CD14-positive monocyte (primary cell): ENCODE measurements at regions of chr2 and their contacts with region 1.

Region 1: GRCh38 chr2:190959911-190960788 is 53.8 kb downstream of the STAT1 start:
- DNase-seq: no peak
- H3K4me3 ChIP-seq: no peak overlapping the region
- H3K4me3 Mint-ChIP-seq: no peak overlapping the region
- H3K27ac ChIP-seq: no peak overlapping the region
- H3K27ac Mint-ChIP-seq: peak overlapping the region in 1 of 7 donors; percentile 70
- H3K4me1 ChIP-seq: no peaks in the 10 kb centered on the region
- H3K4me1 Mint-ChIP-seq: peaks cover 1% of the 10 kb centered on the region
- H3K27me3 ChIP-seq: no peaks in the 10 kb centered on the region
- H3K27me3 Mint-ChIP-seq: peaks cover 0 to 2% (median 0%) of the 10 kb centered on the region in 3 donors
- CTCF ChIP-seq: no peak

Region 2: GRCh38 chr2:190781604-190782198 is 178.4 kb before region 1 on chr2:
- intact Hi-C with region 1: no loop called
- DNase-seq: peak; percentile 14 to 38 (median 15)
- H3K4me3 ChIP-seq: no peak overlapping the region
- H3K4me3 Mint-ChIP-seq: no peak overlapping the region
- H3K27ac ChIP-seq: no peak overlapping the region
- H3K27ac Mint-ChIP-seq: no peak overlapping the region
- H3K4me1 ChIP-seq: no peaks in the 10 kb centered on the region
- H3K4me1 Mint-ChIP-seq: peaks cover 3% of the 10 kb centered on the region
- H3K27me3 ChIP-seq: no peaks in the 10 kb centered on the region
- H3K27me3 Mint-ChIP-seq: no peaks in the 10 kb centered on the region
- CTCF ChIP-seq: peak; percentile 80

Region 3: DNA sequence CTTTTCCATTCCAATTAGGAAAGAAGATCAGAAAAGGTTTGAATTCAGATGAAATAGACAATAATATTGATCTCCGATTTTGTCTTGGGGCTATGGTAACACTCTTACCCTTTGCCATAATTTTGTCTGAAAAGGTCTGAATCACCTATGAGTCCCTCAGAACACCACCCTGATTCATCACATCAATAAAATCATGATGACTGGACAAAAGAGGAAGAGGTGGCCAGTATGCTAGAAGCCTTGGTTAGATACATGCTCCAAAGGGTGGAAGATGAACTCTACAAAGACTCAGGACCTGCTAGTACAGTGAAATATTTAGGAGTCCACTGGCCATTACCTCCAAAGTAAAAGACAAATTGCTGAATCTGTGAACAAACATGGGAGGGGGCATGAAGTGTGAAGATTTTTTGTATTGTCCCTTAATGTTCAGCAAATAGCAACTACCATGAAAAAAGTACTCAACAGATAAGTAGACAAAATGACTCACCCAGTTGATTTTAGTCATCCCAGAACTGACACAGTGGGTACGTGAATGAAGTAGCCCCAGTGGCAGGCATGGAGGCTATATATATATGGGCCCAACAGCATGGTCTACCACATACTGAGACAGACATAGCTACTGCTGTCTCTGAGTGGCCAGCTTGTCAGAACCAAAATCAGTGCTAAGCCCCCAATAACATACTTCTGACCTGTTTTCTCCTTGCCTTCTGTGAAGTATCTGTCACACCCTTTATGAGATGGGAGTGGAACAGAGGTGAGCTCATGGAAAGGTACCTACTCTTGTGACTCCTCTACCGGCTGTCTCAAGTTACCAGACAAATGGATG is 116.1 kb before region 1 on chr2:
- intact Hi-C with region 1: loop called in 1 of 2 experiments (anchors 10 kb)
- DNase-seq: peak in 1 of 3 donors; percentile 42
- H3K4me3 ChIP-seq: no peak overlapping the region
- H3K4me3 Mint-ChIP-seq: no peak overlapping the region
- H3K27ac ChIP-seq: no peak overlapping the region
- H3K27ac Mint-ChIP-seq: no peak overlapping the region
- H3K4me1 ChIP-seq: no peaks in the 10 kb centered on the region
- H3K4me1 Mint-ChIP-seq: peaks cover 5% of the 10 kb centered on the region
- H3K27me3 ChIP-seq: no peaks in the 10 kb centered on the region
- H3K27me3 Mint-ChIP-seq: no peaks in the 10 kb centered on the region
- CTCF ChIP-seq: no peak